G401 (cell line): ENCODE measurements at regions of chr17 and their contacts with region 1.

Region 1: GRCh38 chr17:2624292-2624731 is 30.9 kb downstream of the PAFAH1B1 start:
- DNase-seq: peak; percentile 38

Region 2: GRCh38 chr17:2484876-2485275 is 139.4 kb before region 1 on chr17:
- in situ Hi-C with region 1: loop called (anchors 25 kb)
- DNase-seq: peak; percentile 26